Activated naive CD4-positive, alpha-beta T cell treated with anti-CD3 and anti-CD28 coated beads for 36 hours (primary cell): ENCODE measurements at regions of chr9 and their contacts with region 1.

Region 1: DNA sequence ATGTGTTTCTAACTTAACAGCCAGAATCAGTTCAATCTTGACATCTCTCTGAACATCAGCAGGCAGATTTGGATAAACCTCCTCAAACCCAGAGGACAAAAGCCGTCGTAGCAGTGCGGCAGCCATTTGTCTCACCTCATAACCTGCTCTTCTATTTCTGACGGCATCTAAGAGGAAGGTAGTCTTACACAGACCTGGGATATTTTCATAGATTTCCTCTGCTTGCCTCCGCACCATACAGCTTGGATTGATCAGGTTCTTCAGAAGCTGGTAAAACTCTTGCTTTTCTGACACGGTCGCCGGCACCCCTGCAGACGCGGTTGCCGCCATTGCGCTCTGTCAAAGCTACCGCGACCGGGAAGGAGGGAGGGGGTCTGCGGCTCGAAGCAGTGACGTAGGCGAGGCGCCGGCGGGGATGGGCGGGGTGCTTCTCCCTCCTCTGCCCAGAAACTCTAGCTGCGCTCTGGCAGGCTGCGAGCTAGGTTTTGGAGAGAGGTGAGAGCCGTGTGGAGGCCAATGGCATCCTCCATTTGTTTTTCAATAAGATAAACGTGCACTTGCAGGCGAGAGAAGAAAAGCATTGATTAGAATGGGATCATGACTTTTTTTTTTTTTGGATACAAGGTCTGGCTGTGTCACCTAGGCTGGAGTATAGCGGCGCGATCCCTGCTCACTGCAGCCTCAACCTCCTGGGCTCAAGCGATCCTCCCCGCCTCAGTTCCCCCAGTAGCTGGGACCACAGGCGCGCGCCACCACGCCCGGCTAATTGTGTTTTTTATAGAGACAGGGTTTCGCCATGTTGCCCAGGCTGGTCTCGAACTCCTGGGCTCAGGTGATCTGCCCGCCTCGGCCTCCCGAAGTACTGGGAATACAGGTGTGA is at the start of gene RANBP6:
- DNase-seq: peak; percentile 95
- H3K4me3 Mint-ChIP-seq: peak within 1 kb of the TSS; percentile 98
- H3K27ac Mint-ChIP-seq: peak within 1 kb of the TSS; percentile 99
- H3K4me1 Mint-ChIP-seq: peaks cover 42% of the 10 kb centered on the region
- H3K27me3 Mint-ChIP-seq: no peaks in the 10 kb centered on the region
- total RNA-seq, gene RANBP6: 19.0 to 19.5 TPM

Region 2: DNA sequence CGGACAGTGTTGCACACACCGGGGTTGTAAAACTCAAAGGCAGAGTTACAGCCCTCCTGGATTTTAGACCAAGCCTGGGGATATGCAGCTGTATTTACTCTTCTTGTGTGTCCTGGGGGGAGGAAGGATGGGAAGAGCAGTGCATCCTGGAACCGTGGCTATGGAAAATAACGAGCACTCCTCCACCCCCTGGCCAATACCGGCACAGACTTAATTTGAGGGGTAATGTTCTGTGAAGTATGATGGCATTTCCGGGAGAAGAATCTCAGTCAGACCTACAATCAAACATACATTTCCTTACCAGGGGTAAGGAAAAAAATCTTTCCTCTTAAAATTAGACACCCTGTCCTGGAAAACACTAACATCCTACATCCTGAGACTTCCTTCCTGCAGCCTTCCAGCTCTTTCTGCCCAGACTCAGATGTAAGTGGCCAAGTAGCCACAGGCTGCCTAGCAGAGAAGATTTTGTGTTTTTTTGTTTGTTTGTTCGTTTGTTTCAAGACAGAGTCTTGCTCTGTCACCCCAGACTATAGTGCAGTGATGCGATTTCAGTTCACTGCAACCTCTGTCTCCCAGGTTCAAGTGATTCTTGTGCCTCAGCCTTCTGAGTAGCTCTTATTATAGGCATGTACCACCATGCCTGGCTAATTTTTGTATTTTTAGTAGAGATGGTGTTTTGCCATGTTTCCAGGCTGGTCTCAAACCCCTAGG is 171.6 kb before region 1 on chr9:
- CTCF ChIA-PET with region 1: no interaction called
- intact Hi-C with region 1: loop called (anchors 2 kb)
- DNase-seq: peak; percentile 39
- H3K4me3 Mint-ChIP-seq: peak overlapping the region; percentile 33
- H3K27ac Mint-ChIP-seq: peak overlapping the region; percentile 74
- H3K4me1 Mint-ChIP-seq: peaks cover 57% of the 10 kb centered on the region
- H3K27me3 Mint-ChIP-seq: no peaks in the 10 kb centered on the region

Region 3: DNA sequence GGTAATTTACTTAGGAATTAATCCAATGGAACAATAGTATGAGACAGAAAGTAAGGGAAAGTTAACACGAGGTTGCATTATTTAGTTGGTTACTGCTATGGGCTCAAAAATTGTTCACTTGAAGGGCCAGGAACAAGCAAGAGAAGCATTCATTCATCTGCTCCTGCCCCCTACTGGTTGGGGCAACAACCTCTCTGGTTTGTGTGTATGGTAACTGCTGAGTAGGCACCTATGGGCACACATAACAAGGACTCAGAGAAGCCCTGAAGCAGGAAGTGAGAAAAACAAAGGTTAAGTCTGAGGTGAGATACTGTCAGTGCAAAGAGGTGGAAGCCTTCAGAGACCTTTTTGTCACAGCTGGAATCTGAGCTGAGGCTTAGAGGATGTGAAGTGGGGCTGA is 34.3 kb after region 1 on chr9:
- CTCF ChIA-PET with region 1: interaction called, 5 read pairs
- intact Hi-C with region 1: loop called (anchors 1 kb)
- DNase-seq: peak; percentile 77
- H3K4me3 Mint-ChIP-seq: no peak overlapping the region
- H3K27ac Mint-ChIP-seq: no peak overlapping the region
- H3K4me1 Mint-ChIP-seq: peaks cover 11% of the 10 kb centered on the region
- H3K27me3 Mint-ChIP-seq: peaks cover 3% of the 10 kb centered on the region

Region 4: DNA sequence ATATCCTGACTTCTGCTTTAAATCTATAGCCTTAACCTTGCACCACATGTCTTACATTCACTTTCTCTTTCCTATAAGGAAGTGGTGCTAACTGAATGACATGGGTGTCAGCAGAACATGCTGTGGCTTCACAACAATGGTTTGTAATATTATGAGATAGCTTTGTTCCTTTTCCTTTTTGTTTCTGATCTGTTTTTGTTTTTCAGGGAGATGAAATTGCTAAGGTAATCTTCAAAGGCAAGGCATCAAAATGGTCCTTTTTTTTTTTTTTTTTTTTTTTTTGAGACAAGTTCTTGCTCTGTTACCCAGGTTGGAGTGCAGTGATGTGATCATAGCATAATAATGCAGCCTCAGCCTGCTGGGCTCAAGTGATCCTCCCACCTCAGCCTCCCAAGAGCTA is 53.5 kb after region 1 on chr9:
- CTCF ChIA-PET with region 1: no interaction called
- intact Hi-C with region 1: loop called (anchors 1 kb)
- DNase-seq: peak; percentile 38
- H3K4me3 Mint-ChIP-seq: peak overlapping the region; percentile 39
- H3K27ac Mint-ChIP-seq: peak overlapping the region; percentile 81
- H3K4me1 Mint-ChIP-seq: peaks cover 18% of the 10 kb centered on the region
- H3K27me3 Mint-ChIP-seq: no peaks in the 10 kb centered on the region

Region 5: GRCh38 chr9:6113312-6113711 is 97.8 kb after region 1 on chr9:
- CTCF ChIA-PET with region 1: no interaction called
- intact Hi-C with region 1: no loop called
- DNase-seq: no peak
- H3K4me3 Mint-ChIP-seq: no peak overlapping the region
- H3K27ac Mint-ChIP-seq: no peak overlapping the region
- H3K4me1 Mint-ChIP-seq: peaks cover 11% of the 10 kb centered on the region
- H3K27me3 Mint-ChIP-seq: no peaks in the 10 kb centered on the region